ENCODE measurements at regions of chr17 and their contacts with region 1.

Region 1: GRCh38 chr17:65100316-65101140 is 36.6 kb upstream of the RGS9 start:
- DNase-seq: peak; percentile 84
- CTCF ChIP-seq: peak; percentile 94

Region 2: GRCh38 chr17:65064452-65065019 is 36.0 kb before region 1 on chr17:
- CTCF ChIA-PET with region 1: interaction called, 24 read pairs
- POLR2A ChIA-PET with region 1: no interaction called
- DNase-seq: no peak
- CTCF ChIP-seq: no peak

Region 3: GRCh38 chr17:65115839-65116238 is 15.3 kb after region 1 on chr17:
- CTCF ChIA-PET with region 1: interaction called, 11 read pairs
- POLR2A ChIA-PET with region 1: no interaction called
- DNase-seq: no peak
- CTCF ChIP-seq: no peak

Region 4: DNA sequence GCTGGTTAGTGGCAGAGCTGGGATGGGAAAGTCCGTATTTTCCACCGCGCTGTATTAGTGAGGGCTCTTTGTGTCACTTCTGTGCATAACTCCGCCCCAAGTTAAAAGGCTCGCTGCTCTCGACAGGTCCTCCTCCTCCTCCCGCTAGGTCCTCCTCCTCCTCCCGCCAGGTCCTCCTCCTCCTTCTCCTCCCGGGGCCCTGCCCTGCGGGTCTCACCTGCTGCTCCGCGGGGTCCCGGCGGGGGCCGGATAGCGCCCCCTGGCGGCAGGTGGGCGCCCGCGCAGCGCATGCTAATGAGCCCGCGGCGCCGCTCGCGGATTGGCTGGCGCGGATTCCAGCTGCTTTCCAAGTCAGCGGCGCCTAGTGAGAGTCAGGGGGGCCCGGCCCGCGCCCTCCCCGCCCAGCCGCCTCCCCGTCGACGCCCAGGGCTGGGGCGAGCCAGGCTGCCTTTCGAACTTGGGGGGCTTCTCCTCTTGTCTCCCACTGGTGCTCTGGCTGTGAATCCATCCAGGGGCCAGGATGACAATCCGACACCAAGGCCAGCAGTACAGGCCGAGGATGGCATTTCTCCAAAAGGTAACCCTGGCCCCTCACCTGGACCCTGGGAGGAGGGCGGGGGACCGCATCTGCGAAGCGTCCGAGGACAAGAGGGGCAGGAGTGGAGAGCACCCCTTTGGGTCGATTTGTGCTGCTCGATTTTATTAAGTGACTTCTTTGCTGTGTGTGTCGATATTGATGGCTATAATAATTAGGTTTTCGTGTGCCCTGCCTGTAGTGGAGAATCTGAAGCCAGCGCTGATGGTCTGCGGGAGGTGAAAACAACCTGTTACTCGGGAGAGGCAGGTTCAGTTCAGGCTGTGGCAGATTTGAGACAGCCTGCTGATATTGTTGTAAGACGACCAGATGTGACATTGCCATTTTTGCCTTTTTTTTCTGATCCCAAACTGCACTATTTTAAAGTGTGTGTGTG is 36.8 kb after region 1 on chr17 and contains the start of gene RGS9:
- CTCF ChIA-PET with region 1: interaction called, 49 read pairs
- POLR2A ChIA-PET with region 1: no interaction called
- DNase-seq: peak; percentile 90
- CTCF ChIP-seq: peak; percentile 95

Region 5: DNA sequence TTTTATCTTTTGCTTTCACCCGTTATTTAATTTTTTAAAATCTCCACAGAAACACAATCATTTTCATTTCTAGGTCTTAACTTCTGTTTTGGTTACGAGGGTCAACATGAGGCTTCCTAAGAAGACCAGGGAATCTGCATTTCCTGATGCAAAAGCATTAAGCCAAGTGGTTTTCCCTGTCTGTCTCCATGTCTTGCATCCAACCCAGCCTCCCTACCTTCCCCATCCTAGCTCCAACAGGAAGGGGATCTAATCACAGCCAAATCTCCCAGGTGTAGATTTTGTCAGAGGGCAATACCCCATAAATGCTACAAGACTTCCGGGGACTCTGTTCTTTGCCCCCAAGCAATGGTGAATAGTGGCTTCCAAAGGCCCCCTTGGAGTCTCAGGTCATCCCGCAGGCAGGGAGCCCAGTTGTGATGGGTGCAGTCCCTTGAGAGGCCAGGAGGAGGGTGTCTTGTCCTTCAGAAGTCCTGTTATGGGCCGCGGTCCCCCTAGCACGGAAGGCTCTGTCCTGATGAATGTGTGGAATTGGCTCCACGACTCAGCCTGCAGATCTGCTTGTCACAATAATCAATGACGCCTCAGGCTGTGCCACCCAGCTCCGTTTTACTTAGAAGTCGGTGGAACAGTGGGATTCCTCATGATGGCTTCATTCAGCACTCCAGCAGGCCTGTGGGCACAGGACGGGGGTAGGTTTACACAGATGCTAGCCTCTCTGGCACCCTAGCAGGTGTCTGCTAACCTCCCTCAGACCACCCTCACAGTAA is 177.7 kb after region 1 on chr17:
- CTCF ChIA-PET with region 1: no interaction called
- POLR2A ChIA-PET with region 1: no interaction called
- DNase-seq: peak; percentile 30
- CTCF ChIP-seq: no peak